GM10248 (cell line): ENCODE measurements at regions of chr6 and their contacts with region 1.

Region 1: DNA sequence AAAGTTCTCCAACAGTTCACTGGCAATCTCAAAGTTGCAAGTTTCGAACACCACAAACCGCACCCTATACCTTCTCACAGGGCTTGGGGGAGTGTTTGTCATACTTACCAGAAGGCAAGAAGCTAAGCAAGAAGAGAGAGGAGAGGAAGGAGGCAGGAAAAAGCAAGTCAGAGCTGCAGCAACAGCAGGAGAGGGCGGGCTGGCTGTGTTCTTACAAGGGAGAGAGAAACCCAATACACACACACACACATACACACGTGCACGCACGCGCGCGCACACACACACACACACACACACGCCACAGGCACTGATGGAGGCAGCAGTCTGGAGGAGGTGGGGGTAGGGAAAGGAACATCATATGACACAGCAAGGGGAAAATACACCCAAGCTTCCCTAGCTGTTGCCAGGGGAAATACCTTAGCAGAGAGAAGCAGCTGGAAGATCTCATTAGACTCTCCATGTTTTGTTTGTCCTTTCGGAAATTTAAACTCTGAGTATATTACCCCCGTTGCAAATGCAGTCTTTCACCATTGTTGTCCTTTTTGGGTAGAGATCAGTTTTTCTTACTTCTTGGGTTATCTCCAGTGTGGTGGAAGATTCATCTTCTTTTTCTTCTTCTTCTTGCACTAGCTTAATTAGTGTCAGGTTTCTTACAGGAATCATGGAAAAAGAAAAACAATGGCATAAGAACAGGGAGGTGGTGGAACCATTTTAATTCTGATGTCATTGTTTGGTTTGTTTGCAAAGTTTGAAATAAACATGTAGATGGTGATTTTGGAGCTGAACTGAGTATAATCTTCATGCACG is at the start of gene TXLNB:
- DNase-seq: peak; percentile 49
- CTCF ChIP-seq: no peak

Region 2: GRCh38 chr6:138031850-138032249 is 1260.2 kb before region 1 on chr6:
- CTCF ChIA-PET with region 1: no interaction called
- POLR2A ChIA-PET with region 1: no interaction called
- DNase-seq: no peak
- CTCF ChIP-seq: no peak

Region 3: DNA sequence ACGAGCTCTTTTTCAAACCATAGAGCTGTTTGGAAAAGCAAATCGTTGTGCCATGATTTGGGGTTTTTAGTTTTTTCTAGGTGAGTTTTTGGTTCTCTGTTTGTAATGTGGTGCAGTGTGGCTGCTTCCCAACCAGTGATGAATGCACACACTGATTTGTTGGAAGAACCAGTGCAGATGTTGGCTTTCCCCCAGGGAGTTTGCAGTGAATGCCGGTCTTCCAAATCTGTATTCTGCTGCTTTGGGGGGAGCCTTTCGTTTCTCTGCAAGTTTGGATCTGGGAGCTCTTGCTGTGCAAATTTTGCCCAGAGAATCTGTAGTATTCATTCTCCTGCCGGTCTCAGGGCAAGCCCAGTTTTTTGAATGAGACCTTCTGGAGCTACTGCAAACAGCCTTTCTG is 142.6 kb before region 1 on chr6:
- CTCF ChIA-PET with region 1: no interaction called
- POLR2A ChIA-PET with region 1: no interaction called
- DNase-seq: no peak
- CTCF ChIP-seq: no peak

Region 4: DNA sequence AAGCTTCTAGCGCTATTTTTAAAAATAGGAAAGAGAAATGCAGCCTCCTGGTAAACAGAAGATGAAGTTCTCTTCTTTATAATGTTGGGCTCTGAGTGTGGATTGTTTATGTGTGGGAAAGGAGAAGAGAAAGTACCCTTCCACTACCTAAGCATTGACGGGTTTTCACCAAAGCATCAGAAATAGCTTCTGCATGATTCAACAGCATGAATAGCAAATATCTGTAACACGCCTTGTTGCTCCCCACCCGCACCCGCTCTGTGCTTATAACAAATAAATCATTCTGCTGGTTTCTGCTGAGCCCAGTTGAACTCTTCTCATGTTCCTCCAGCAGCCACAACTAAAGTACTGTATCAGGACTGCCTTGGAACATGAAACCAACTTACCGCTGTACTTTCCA is 21.0 kb before region 1 on chr6:
- CTCF ChIA-PET with region 1: interaction called, 12 read pairs
- POLR2A ChIA-PET with region 1: no interaction called
- DNase-seq: peak; percentile 53
- CTCF ChIP-seq: no peak

Region 5: GRCh38 chr6:139448051-139448649 is 156.1 kb after region 1 on chr6:
- CTCF ChIA-PET with region 1: no interaction called
- POLR2A ChIA-PET with region 1: no interaction called
- DNase-seq: peak; percentile 44
- CTCF ChIP-seq: no peak